HAP-1 (cell line): ENCODE measurements at regions of chr3 and their contacts with region 1.

Region 1: GRCh38 chr3:9384141-9384853 is 13.1 kb upstream of the SETD5 start:
- DNase-seq: no peak
- H3K4me3 ChIP-seq: no peak overlapping the region
- H3K4me1 ChIP-seq: peaks cover 7% of the 10 kb centered on the region; the same call in 1 of the 2 replicates
- H3K27me3 ChIP-seq: no peaks in the 10 kb centered on the region

Region 2: GRCh38 chr3:9439331-9439730 is 55.0 kb after region 1 on chr3:
- in situ Hi-C with region 1: loop called (anchors 10 kb)
- DNase-seq: no peak
- H3K4me3 ChIP-seq: no peak overlapping the region
- H3K4me1 ChIP-seq: no peaks in the 10 kb centered on the region
- H3K27me3 ChIP-seq: no peaks in the 10 kb centered on the region